Caco-2 (cell line): ENCODE measurements at regions of chr2 and their contacts with region 1.

Region 1: GRCh38 chr2:33033606-33034081 is 86.9 kb downstream of the LTBP1 start:
- DNase-seq: peak in 1 of 2 experiments; percentile 50
- H3K4me3 ChIP-seq: no peak overlapping the region
- H3K4me3 Mint-ChIP-seq: no peak overlapping the region
- H3K27ac Mint-ChIP-seq: no peak overlapping the region
- H3K4me1 ChIP-seq: no peaks in the 10 kb centered on the region
- H3K4me1 Mint-ChIP-seq: peaks cover 6% of the 10 kb centered on the region
- H3K27me3 ChIP-seq: no peaks in the 10 kb centered on the region
- H3K27me3 Mint-ChIP-seq: no peaks in the 10 kb centered on the region
- CTCF ChIP-seq: peak; percentile 59 to 73

Region 2: DNA sequence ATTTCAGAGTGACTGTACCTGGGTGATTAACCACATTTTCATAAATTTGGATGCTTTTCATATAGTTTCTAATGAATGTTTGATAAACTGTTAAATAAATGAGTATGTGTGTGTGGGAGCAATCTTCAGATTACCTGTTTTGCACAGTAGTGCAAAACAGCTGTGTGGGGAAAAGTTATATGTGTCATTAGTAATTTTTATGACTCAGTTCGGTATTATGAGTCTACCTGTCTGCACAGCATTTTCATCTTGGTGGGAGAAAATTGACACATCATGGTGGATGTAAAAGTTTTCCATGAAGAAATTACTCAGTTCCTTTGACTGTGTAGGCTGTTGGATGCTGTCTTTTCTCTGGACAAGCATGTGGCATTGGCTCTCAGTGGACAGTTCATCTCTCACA is 43.1 kb before region 1 on chr2:
- CTCF ChIA-PET with region 1: no interaction called
- POLR2A ChIA-PET with region 1: no interaction called
- intact Hi-C with region 1: loop called (anchors 2 kb)
- DNase-seq: no peak
- H3K4me3 ChIP-seq: no peak overlapping the region
- H3K4me3 Mint-ChIP-seq: no peak overlapping the region
- H3K27ac Mint-ChIP-seq: no peak overlapping the region
- H3K4me1 ChIP-seq: no peaks in the 10 kb centered on the region
- H3K4me1 Mint-ChIP-seq: no peaks in the 10 kb centered on the region
- H3K27me3 ChIP-seq: no peaks in the 10 kb centered on the region
- H3K27me3 Mint-ChIP-seq: no peaks in the 10 kb centered on the region
- CTCF ChIP-seq: no peak

Region 3: DNA sequence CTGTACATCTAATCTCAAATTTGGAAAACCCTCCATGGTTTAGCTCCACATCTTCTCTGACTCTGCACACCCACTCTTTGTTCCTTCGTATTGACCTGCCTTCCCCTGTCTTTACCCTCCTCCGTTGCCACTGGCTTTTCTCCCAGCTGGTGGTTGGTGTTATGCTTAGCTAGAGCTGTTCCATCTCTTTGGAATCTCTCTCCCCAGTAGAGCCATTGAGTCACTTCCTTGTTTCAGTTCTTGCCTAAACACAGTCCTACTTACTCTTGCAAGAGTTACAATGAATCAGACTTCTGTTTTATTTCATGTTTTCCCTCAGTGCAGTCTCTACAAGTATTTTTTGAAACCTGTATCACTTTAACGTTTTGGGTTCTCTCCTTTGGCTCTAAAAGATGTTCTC is 177.0 kb after region 1 on chr2:
- CTCF ChIA-PET with region 1: no interaction called
- POLR2A ChIA-PET with region 1: no interaction called
- intact Hi-C with region 1: no loop called
- DNase-seq: no peak
- H3K4me3 ChIP-seq: no peak overlapping the region
- H3K4me3 Mint-ChIP-seq: no peak overlapping the region
- H3K27ac Mint-ChIP-seq: no peak overlapping the region
- H3K4me1 ChIP-seq: peaks cover 40% of the 10 kb centered on the region
- H3K4me1 Mint-ChIP-seq: peaks cover 28% of the 10 kb centered on the region
- H3K27me3 ChIP-seq: no peaks in the 10 kb centered on the region
- H3K27me3 Mint-ChIP-seq: no peaks in the 10 kb centered on the region
- CTCF ChIP-seq: no peak

Region 4: GRCh38 chr2:33272001-33272400 is 238.4 kb after region 1 on chr2:
- CTCF ChIA-PET with region 1: interaction called, 3 read pairs
- POLR2A ChIA-PET with region 1: no interaction called
- intact Hi-C with region 1: loop called (anchors 1 kb)
- DNase-seq: no peak
- H3K4me3 ChIP-seq: no peak overlapping the region
- H3K4me3 Mint-ChIP-seq: no peak overlapping the region
- H3K27ac Mint-ChIP-seq: no peak overlapping the region
- H3K4me1 ChIP-seq: 0 out of 2 replicates have a peak, but pooled peaks cover 4% of the 10 kb centered on the region
- H3K4me1 Mint-ChIP-seq: peaks cover 17% of the 10 kb centered on the region
- H3K27me3 ChIP-seq: no peaks in the 10 kb centered on the region
- H3K27me3 Mint-ChIP-seq: no peaks in the 10 kb centered on the region
- CTCF ChIP-seq: no peak

Region 5: GRCh38 chr2:33380001-33380609 is 346.5 kb after region 1 on chr2:
- CTCF ChIA-PET with region 1: interaction called, 6 read pairs
- POLR2A ChIA-PET with region 1: no interaction called
- intact Hi-C with region 1: loop called (anchors 1 kb)
- DNase-seq: peak in 1 of 2 experiments; percentile 23
- H3K4me3 ChIP-seq: no peak overlapping the region
- H3K4me3 Mint-ChIP-seq: no peak overlapping the region
- H3K27ac Mint-ChIP-seq: no peak overlapping the region
- H3K4me1 ChIP-seq: no peaks in the 10 kb centered on the region
- H3K4me1 Mint-ChIP-seq: no peaks in the 10 kb centered on the region
- H3K27me3 ChIP-seq: no peaks in the 10 kb centered on the region
- H3K27me3 Mint-ChIP-seq: no peaks in the 10 kb centered on the region
- CTCF ChIP-seq: peak; percentile 50 to 79

Region 6: DNA sequence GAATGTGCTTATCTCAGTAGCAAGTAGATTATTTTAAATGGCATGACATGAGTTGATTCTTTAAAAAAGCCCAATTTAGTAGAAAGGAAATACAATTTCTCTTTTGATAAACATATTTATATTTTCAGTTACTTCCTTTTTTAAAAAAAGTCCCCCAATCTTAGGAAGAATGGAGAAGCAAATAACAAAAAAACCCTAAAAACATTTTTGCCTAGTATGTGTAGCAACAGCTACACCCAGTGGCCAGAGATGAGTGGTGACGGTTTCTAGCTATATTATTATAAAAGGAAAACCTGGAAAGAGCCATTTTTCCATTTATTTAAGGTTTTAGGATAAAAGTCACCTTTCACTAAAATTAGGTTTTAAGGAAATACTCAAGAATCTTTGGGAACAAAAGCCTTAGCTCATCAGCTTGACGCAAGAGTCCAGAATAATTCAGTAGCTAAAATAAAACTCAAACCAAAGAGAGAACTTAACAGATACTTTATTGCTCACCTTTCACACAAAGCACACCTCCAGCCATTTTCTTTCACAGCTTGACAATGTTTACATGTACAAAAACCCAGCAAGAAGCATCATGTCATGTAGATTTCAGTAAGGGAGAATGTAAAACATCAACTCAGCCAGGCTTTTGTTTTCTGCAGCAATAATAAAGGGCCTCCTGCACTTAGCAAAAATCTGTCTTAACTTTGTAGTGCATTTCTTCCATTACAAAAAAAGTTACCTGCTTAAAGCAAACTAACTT is 549.7 kb after region 1 on chr2:
- CTCF ChIA-PET with region 1: no interaction called
- POLR2A ChIA-PET with region 1: no interaction called
- intact Hi-C with region 1: loop called (anchors 10 kb)
- DNase-seq: peak in 1 of 2 experiments; percentile 44
- H3K4me3 ChIP-seq: no peak overlapping the region
- H3K4me3 Mint-ChIP-seq: no peak overlapping the region
- H3K27ac Mint-ChIP-seq: no peak overlapping the region
- H3K4me1 ChIP-seq: no peaks in the 10 kb centered on the region
- H3K4me1 Mint-ChIP-seq: no peaks in the 10 kb centered on the region
- H3K27me3 ChIP-seq: no peaks in the 10 kb centered on the region
- H3K27me3 Mint-ChIP-seq: no peaks in the 10 kb centered on the region
- CTCF ChIP-seq: peak; percentile 83 to 85